Esophagus squamous epithelium (tissue), 5 donors: ENCODE measurements at regions of chr14 and their contacts with region 1.

Region 1: DNA sequence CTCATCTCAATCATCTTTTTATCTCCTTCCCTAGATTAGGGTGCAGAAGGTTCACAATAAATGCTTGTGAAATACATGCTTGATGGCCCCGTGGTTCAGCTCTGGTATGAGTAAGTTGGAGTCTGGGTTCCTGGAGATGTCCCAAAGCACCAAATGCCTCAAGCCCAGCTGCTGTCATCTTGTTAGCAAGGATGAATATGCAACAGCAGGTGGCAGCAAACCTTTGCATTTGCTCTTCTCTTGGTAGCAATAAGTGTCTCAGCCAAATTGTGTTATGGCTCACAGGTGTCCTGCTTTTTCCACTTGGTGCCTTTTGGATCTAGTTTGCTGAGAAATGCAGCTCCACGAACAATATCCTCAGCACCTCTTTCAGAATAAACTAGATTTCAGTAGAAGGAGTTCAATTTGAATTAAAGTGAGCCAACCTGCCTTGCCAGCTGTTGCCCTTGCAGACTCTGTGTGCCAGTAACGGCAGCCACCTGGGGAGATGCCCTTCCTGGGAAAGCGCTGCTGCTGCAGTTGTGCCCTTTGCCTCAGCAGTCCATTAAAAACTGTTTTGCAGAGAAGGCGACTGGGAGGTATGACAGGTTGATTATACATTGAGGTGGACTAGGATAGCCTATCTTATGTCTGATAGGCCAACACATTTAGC is 417.3 kb downstream of the SNAPC1 start:
- DNase-seq: no peak
- H3K4me3 ChIP-seq: no peak overlapping the region
- H3K27ac ChIP-seq: no peak overlapping the region
- H3K4me1 ChIP-seq: no peaks in the 10 kb centered on the region
- H3K27me3 ChIP-seq: peaks cover 0 to 5% (median 0%) of the 10 kb centered on the region in 4 donors
- CTCF ChIP-seq: peak in 5 of 6 experiments; percentile 43 to 78 (median 58)
- POLR2A ChIP-seq: no peak

Region 2: DNA sequence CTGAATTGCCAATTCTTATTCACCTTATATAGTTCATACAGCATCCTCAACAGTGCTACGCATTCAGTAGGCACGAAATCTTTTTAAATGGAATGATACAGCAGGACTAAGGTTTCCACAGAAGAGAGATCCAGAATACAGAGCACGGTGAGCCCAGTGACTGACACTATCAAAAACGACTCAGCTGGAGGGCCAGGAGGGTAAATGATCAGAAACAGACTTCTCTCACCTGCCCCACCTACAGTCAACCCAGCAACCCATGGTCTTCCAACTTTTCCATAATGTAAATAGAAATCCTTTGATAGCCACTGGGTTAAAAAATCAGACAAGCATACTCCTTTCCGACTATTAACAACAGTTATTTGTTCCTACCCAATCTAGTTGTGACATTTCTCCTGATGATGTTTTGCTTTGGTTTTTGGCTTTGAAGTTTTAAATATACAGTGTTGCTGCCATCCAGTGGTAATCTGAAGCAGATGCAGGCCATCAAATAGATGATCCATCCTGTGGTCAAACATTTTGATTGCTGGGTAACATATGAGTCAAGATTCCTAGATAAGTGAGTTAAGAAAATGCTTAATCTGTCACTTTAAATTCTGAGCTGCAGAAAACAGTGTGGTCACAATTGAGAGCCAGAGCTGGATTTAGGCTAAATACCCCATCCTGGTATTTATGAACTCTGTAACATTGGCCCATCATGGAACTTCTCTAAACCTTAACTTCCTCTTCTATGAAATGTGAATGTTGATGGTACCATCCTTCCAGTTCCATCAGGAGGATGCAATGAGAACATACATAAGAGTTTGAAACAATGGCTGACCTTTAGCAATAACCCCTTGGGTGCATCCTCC is 1097.2 kb after region 1 on chr14:
- intact Hi-C with region 1: loop called (anchors 5 kb)
- DNase-seq: no peak
- H3K4me3 ChIP-seq: no peak overlapping the region
- H3K27ac ChIP-seq: no peak overlapping the region
- H3K4me1 ChIP-seq: peaks cover 0 to 8% (median 0%) of the 10 kb centered on the region in 3 donors
- H3K27me3 ChIP-seq: no peaks in the 10 kb centered on the region
- CTCF ChIP-seq: peak in 5 of 6 experiments; percentile 57 to 85 (median 78)
- POLR2A ChIP-seq: no peak